ENCODE measurements at regions of chr15 and their contacts with region 1.

Region 1: GRCh38 chr15:88938802-88939485 is 25.8 kb upstream of the MFGE8 start:
- DNase-seq: peak; percentile 34 to 87 (median 50)
- ATAC-seq: peak; percentile 94
- H3K4me3 ChIP-seq: no peak overlapping the region
- H3K27ac ChIP-seq: peak overlapping the region; percentile 71
- H3K4me1 ChIP-seq: peaks cover 6 to 20% of the 10 kb centered on the region in 2 experiments; a peak in 4 of 5 replicates
- H3K27me3 ChIP-seq: no peaks in the 10 kb centered on the region
- CTCF ChIP-seq: peak; percentile 59 to 73 (median 70)
- EP300 ChIP-seq: peak; percentile 65
- POLR2A ChIP-seq: peak; percentile 66
- RAD21 ChIP-seq: peak; percentile 66 to 79

Region 2: GRCh38 chr15:87014244-87014643 is 1924.7 kb before region 1 on chr15:
- CTCF ChIA-PET with region 1: no interaction called
- POLR2A ChIA-PET with region 1: no interaction called
- in situ Hi-C with region 1: no loop called
- intact Hi-C with region 1: no loop called
- DNase-seq: no peak
- ATAC-seq: no peak
- H3K4me3 ChIP-seq: no peak overlapping the region
- H3K27ac ChIP-seq: no peak overlapping the region
- H3K4me1 ChIP-seq: no peaks in the 10 kb centered on the region
- H3K27me3 ChIP-seq: no peaks in the 10 kb centered on the region
- CTCF ChIP-seq: no peak
- EP300 ChIP-seq: no peak
- POLR2A ChIP-seq: no peak
- RAD21 ChIP-seq: no peak

Region 3: GRCh38 chr15:88828791-88829190 is 110.2 kb before region 1 on chr15:
- CTCF ChIA-PET with region 1: no interaction called
- POLR2A ChIA-PET with region 1: no interaction called
- in situ Hi-C with region 1: no loop called
- intact Hi-C with region 1: no loop called
- DNase-seq: no peak
- ATAC-seq: no peak
- H3K4me3 ChIP-seq: no peak overlapping the region
- H3K27ac ChIP-seq: no peak overlapping the region
- H3K4me1 ChIP-seq: no peaks in the 10 kb centered on the region
- H3K27me3 ChIP-seq: peaks cover 10 to 40% of the 10 kb centered on the region in 2 experiments; a peak in 3 of 5 replicates
- CTCF ChIP-seq: no peak
- EP300 ChIP-seq: no peak
- POLR2A ChIP-seq: no peak
- RAD21 ChIP-seq: no peak

Region 4: DNA sequence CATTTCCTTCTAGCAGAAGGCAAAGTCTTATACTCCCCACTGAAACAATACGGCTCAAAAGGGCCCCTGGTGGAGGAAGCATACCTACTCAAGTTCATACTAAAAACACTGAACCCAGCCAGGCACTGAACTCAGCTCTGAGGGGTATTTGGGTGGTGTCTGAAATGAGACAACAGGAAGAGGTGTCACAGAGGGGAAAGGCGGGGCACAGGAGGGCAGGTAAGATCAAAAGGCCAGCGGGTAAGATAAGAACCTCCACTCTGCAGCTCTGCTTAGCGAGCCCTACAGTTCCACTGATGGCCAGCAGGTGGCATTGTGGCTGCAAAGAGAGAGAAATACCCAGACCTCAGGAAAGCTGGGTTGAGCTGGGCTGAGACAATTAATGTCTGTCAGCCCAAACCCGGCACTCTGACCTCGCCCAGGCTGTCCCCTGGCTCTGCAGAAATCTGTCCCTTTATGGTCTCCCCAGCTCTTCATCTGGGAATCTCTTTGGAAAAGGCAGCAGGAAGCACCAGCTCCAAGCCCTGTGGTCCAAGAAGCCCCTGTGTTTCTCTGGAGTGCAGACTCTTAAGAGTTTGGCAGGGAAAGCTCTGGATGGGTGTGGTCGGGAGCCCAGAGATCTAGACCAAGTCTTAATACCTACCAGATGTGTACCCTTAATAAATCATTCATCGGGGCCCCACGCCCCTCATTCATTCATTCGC is 34.2 kb before region 1 on chr15:
- CTCF ChIA-PET with region 1: no interaction called
- POLR2A ChIA-PET with region 1: no interaction called
- in situ Hi-C with region 1: no loop called
- intact Hi-C with region 1: loop called (anchors 2 kb)
- DNase-seq: peak; percentile 85 to 91 (median 88)
- ATAC-seq: peak; percentile 93
- H3K4me3 ChIP-seq: no peak overlapping the region
- H3K27ac ChIP-seq: 0 out of 3 replicates have a peak overlapping the region, but pooled peaks have one; percentile 25
- H3K4me1 ChIP-seq: peaks cover 17 to 26% of the 10 kb centered on the region in 2 experiments; a peak in 4 of 5 replicates
- H3K27me3 ChIP-seq: no peaks in the 10 kb centered on the region
- CTCF ChIP-seq: peak; percentile 94 to 98 (median 94)
- EP300 ChIP-seq: peak; percentile 13; the same call in 1 of the 2 replicates
- POLR2A ChIP-seq: no peak
- RAD21 ChIP-seq: peak; percentile 94 to 95

Region 5: GRCh38 chr15:89003865-89004725 is 65.2 kb after region 1 on chr15:
- CTCF ChIA-PET with region 1: no interaction called
- POLR2A ChIA-PET with region 1: interaction called, 3 read pairs
- in situ Hi-C with region 1: no loop called
- intact Hi-C with region 1: loop called (anchors 2 kb)
- DNase-seq: peak; percentile 60 to 80 (median 72)
- ATAC-seq: peak; percentile 96
- H3K4me3 ChIP-seq: no peak overlapping the region
- H3K27ac ChIP-seq: no peak overlapping the region
- H3K4me1 ChIP-seq: peaks cover 15 to 31% of the 10 kb centered on the region in 2 experiments
- H3K27me3 ChIP-seq: no peaks in the 10 kb centered on the region
- CTCF ChIP-seq: peak; percentile 75 to 85 (median 80)
- EP300 ChIP-seq: no peak
- POLR2A ChIP-seq: no peak
- RAD21 ChIP-seq: peak; percentile 82 to 95